ENCODE measurements at regions of chr12 and their contacts with region 1.

Region 1: GRCh38 chr12:113334786-113335540 is at the start of gene SLC8B1:
- DNase-seq: peak; percentile 88
- ATAC-seq: peak; percentile 99
- H3K4me3 Mint-ChIP-seq: peak within 1 kb of the TSS; percentile 96
- H3K27ac Mint-ChIP-seq: peak within 1 kb of the TSS; percentile 70
- H3K4me1 Mint-ChIP-seq: peaks cover 23% of the 10 kb centered on the region
- H3K27me3 Mint-ChIP-seq: no peaks in the 10 kb centered on the region
- CTCF ChIP-seq: no peak
- total RNA-seq, gene SLC8B1: 13.4 to 18.9 TPM

Region 2: DNA sequence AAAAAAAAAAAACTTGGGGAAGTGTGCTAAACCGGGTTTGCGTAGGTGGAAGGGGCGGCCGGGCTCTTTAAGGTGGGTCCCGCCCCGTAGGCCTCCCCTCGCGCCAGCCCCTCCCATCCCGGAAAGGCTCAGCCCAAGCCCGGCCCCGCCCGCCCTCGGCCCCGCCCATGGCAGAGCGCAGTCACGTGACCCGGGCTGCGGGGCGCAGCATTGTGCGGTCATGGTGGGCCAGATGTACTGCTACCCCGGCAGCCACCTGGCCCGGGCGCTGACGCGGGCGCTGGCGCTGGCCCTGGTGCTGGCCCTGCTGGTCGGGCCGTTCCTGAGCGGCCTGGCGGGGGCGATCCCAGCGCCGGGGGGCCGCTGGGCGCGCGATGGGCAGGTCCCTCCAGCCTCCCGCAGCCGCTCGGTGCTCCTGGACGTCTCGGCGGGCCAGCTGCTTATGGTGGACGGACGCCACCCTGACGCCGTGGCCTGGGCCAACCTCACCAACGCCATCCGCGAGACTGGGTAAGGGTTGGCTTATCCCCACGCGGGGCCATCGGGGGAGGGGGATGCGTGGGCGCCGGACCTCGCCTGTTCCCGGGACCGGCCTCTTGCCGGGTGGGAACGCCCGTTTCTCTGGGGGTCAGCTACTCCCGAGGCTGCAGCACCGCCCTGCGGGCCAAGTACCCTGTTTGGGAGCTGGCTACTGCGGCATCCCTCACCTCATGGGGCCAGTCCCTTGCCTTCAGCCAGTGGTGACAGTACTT is 23.6 kb after region 1 on chr12 and contains the start of gene PLBD2:
- CTCF ChIA-PET with region 1: no interaction called
- POLR2A ChIA-PET with region 1: interaction called, 3 read pairs
- intact Hi-C with region 1: loop called (anchors 2 kb)
- DNase-seq: peak; percentile 96
- ATAC-seq: peak; percentile 99
- H3K4me3 Mint-ChIP-seq: peak within 1 kb of the TSS; percentile 81
- H3K27ac Mint-ChIP-seq: peak within 1 kb of the TSS; percentile 88
- H3K4me1 Mint-ChIP-seq: peaks cover 17% of the 10 kb centered on the region
- H3K27me3 Mint-ChIP-seq: no peaks in the 10 kb centered on the region
- CTCF ChIP-seq: no peak
- total RNA-seq, gene PLBD2: 13.5 to 13.9 TPM

Measured in activated CD8-positive, alpha-beta T cell treated with anti-CD3 and anti-CD28 coated beads for 36 hours (primary cell).